ENCODE measurements at regions of chr5 and their contacts with region 1.

Region 1: GRCh38 chr5:92309336-92309991 is 926.3 kb upstream of the ARRDC3 start:
- DNase-seq: peak; percentile 13
- ATAC-seq: peak; percentile 62
- H3K4me3 ChIP-seq: no peak overlapping the region
- H3K27ac ChIP-seq: peak overlapping the region; percentile 29; the same call in 1 of the 2 replicates
- H3K4me1 ChIP-seq: peaks cover 0 to 13% of the 10 kb centered on the region in 2 experiments; a peak in 1 of 4 replicates
- H3K27me3 ChIP-seq: no peaks in the 10 kb centered on the region
- CTCF ChIP-seq: peak; percentile 42 to 68 (median 47); a peak in 5 of 6 replicates
- POLR2A ChIP-seq: no peak
- RAD21 ChIP-seq: peak; percentile 77

Region 2: GRCh38 chr5:92092239-92092638 is 217.2 kb before region 1 on chr5:
- CTCF ChIA-PET with region 1: no interaction called
- POLR2A ChIA-PET with region 1: no interaction called
- RAD21 ChIA-PET with region 1: no interaction called
- intact Hi-C with region 1: no loop called
- DNase-seq: no peak
- ATAC-seq: no peak
- H3K4me3 ChIP-seq: no peak overlapping the region
- H3K27ac ChIP-seq: no peak overlapping the region
- H3K4me1 ChIP-seq: no peaks in the 10 kb centered on the region
- H3K27me3 ChIP-seq: no peaks in the 10 kb centered on the region
- CTCF ChIP-seq: no peak
- POLR2A ChIP-seq: no peak
- RAD21 ChIP-seq: no peak

Region 3: DNA sequence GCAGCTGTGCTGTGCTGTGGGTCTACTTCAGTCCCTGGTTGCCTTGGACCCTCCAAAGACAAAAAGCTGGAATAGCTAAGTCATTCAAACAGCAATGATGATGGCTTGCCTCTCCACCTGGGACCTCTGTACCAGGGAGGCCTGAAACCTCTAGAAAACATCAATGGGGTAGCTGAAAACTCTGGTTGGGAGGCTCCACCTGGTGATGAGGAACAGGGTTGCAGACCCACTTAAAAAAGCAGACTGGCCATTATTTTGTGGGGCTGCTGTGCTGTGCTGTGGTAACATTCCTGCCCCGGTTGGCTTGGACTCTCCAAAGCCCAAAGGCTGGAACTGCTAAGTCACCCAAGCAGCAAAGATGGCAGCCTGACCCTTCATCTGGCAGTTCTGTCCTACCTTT is 87.0 kb before region 1 on chr5:
- CTCF ChIA-PET with region 1: no interaction called
- POLR2A ChIA-PET with region 1: no interaction called
- RAD21 ChIA-PET with region 1: no interaction called
- intact Hi-C with region 1: no loop called
- DNase-seq: peak; percentile 12
- ATAC-seq: peak; percentile 68
- H3K4me3 ChIP-seq: no peak overlapping the region
- H3K27ac ChIP-seq: no peak overlapping the region
- H3K4me1 ChIP-seq: no peaks in the 10 kb centered on the region
- H3K27me3 ChIP-seq: no peaks in the 10 kb centered on the region
- CTCF ChIP-seq: peak; percentile 40 to 52 (median 42); a peak in 4 of 6 replicates
- POLR2A ChIP-seq: no peak
- RAD21 ChIP-seq: peak; percentile 67

Region 4: DNA sequence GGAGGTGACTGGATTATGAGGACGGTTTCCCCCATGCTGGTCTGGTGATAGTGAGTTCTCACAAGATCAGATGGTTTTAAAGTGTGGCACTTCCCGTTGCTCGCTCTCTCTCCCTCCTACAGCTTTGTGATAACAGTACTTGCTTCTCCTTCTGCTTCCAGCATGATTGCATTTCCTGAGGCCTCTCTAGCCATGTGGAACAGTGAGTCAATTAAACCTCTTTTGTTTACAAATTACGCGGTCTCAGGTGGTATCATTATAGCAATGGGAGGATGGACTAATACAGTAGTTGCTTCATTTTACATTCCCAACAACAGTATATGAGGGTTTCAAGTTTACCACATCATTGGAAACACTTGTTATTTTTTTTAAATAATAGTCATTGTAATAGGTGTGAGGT is 11.0 kb after region 1 on chr5:
- CTCF ChIA-PET with region 1: no interaction called
- POLR2A ChIA-PET with region 1: no interaction called
- RAD21 ChIA-PET with region 1: no interaction called
- intact Hi-C with region 1: no loop called
- DNase-seq: no peak
- ATAC-seq: no peak
- H3K4me3 ChIP-seq: no peak overlapping the region
- H3K27ac ChIP-seq: no peak overlapping the region
- H3K4me1 ChIP-seq: no peaks in the 10 kb centered on the region
- H3K27me3 ChIP-seq: no peaks in the 10 kb centered on the region
- CTCF ChIP-seq: no peak
- POLR2A ChIP-seq: no peak
- RAD21 ChIP-seq: no peak

Region 5: DNA sequence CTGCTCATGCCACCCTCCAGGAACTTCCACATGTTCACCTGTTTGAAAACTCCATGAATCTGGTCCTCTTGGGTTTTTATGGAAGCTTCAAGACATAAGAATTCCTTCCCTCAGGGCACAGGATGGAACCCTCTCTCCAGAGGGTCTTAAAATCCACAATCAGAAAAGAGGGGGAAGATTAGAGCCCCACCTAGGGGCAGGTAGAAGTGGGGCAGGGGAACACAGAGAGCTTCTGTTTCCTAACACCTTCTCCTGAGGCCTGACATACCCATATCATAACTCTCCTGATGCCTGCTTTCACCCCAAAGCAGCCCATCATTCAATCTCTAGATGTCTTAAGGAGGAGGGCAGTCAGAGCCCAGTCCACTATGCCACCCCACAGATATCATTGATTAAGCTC is 161.3 kb after region 1 on chr5:
- CTCF ChIA-PET with region 1: no interaction called
- POLR2A ChIA-PET with region 1: no interaction called
- RAD21 ChIA-PET with region 1: no interaction called
- intact Hi-C with region 1: no loop called
- DNase-seq: no peak
- ATAC-seq: no peak
- H3K4me3 ChIP-seq: no peak overlapping the region
- H3K27ac ChIP-seq: no peak overlapping the region
- H3K4me1 ChIP-seq: no peaks in the 10 kb centered on the region
- H3K27me3 ChIP-seq: no peaks in the 10 kb centered on the region
- CTCF ChIP-seq: peak in 2 of 3 experiments; percentile 21 to 33; a peak in 1 of 6 replicates
- POLR2A ChIP-seq: no peak
- RAD21 ChIP-seq: no peak

Region 6: GRCh38 chr5:92849756-92850155 is 540.3 kb after region 1 on chr5:
- CTCF ChIA-PET with region 1: no interaction called
- POLR2A ChIA-PET with region 1: no interaction called
- RAD21 ChIA-PET with region 1: no interaction called
- intact Hi-C with region 1: loop called (anchors 10 kb)
- DNase-seq: no peak
- ATAC-seq: no peak
- H3K4me3 ChIP-seq: no peak overlapping the region
- H3K27ac ChIP-seq: no peak overlapping the region
- H3K4me1 ChIP-seq: no peaks in the 10 kb centered on the region
- H3K27me3 ChIP-seq: no peaks in the 10 kb centered on the region
- CTCF ChIP-seq: no peak
- POLR2A ChIP-seq: no peak
- RAD21 ChIP-seq: no peak

Region 7: DNA sequence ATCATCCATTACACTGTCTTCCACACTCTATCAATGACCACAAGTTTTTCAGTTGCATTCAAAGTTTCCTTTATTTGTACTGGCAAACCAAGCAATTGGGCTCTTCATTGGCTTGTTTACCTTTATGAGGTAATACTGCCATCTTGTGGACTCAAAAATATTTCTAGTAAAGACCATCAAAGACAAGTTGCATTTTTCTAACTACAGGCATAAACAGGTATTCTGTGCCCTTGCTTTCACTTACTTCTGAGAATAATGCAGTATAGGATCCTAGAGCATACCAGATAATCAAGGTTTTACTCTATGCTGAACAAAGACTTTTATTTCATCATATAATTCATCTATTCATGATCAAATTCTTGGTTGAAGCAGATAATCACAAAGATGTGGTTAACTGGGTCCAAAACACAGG is 1605.7 kb after region 1 on chr5:
- CTCF ChIA-PET with region 1: no interaction called
- POLR2A ChIA-PET with region 1: no interaction called
- RAD21 ChIA-PET with region 1: no interaction called
- intact Hi-C with region 1: loop called (anchors 5 kb)
- DNase-seq: peak; percentile 54
- ATAC-seq: peak; percentile 62
- H3K4me3 ChIP-seq: no peak overlapping the region
- H3K27ac ChIP-seq: no peak overlapping the region
- H3K4me1 ChIP-seq: no peaks in the 10 kb centered on the region
- H3K27me3 ChIP-seq: no peaks in the 10 kb centered on the region
- CTCF ChIP-seq: peak; percentile 35 to 79 (median 42); a peak in 4 of 6 replicates
- POLR2A ChIP-seq: no peak
- RAD21 ChIP-seq: peak; percentile 76